Naive thymus-derived CD4-positive, alpha-beta T cell (primary cell): ENCODE measurements at regions of chr16 and their contacts with region 1.

Region 1: GRCh38 chr16:56356276-56357240 is 68.8 kb downstream of the AMFR start:
- DNase-seq: peak; percentile 26 to 62 (median 43)
- ATAC-seq: peak; percentile 87
- H3K4me3 ChIP-seq: peak overlapping the region; percentile 63
- H3K4me3 Mint-ChIP-seq: peak overlapping the region; percentile 82 to 93 (median 90)
- H3K27ac ChIP-seq: peak overlapping the region; percentile 60
- H3K27ac Mint-ChIP-seq: peak overlapping the region; percentile 71 to 95 (median 91)
- H3K4me1 ChIP-seq: peaks cover 0 to 11% of the 10 kb centered on the region in 2 donors
- H3K4me1 Mint-ChIP-seq: peaks cover 4 to 41% (median 38%) of the 10 kb centered on the region in 7 donors
- H3K27me3 ChIP-seq: no peaks in the 10 kb centered on the region
- H3K27me3 Mint-ChIP-seq: no peaks in the 10 kb centered on the region

Region 2: GRCh38 chr16:56317998-56318826 is 38.3 kb before region 1 on chr16:
- CTCF ChIA-PET with region 1: no interaction called
- POLR2A ChIA-PET with region 1: no interaction called
- intact Hi-C with region 1: loop called in 1 of 2 experiments (anchors 2 kb)
- DNase-seq: peak; percentile 42 to 82 (median 67)
- ATAC-seq: peak; percentile 95
- H3K4me3 ChIP-seq: peak overlapping the region; percentile 47
- H3K4me3 Mint-ChIP-seq: peak overlapping the region; percentile 29 to 72 (median 56)
- H3K27ac ChIP-seq: no peak overlapping the region
- H3K27ac Mint-ChIP-seq: peak overlapping the region in 1 of 9 donors; percentile 66
- H3K4me1 ChIP-seq: peaks cover 0 to 7% of the 10 kb centered on the region in 2 donors
- H3K4me1 Mint-ChIP-seq: peaks cover 0 to 14% (median 0%) of the 10 kb centered on the region in 7 donors
- H3K27me3 ChIP-seq: no peaks in the 10 kb centered on the region
- H3K27me3 Mint-ChIP-seq: peaks cover 0 to 9% (median 4%) of the 10 kb centered on the region in 5 donors

Region 3: DNA sequence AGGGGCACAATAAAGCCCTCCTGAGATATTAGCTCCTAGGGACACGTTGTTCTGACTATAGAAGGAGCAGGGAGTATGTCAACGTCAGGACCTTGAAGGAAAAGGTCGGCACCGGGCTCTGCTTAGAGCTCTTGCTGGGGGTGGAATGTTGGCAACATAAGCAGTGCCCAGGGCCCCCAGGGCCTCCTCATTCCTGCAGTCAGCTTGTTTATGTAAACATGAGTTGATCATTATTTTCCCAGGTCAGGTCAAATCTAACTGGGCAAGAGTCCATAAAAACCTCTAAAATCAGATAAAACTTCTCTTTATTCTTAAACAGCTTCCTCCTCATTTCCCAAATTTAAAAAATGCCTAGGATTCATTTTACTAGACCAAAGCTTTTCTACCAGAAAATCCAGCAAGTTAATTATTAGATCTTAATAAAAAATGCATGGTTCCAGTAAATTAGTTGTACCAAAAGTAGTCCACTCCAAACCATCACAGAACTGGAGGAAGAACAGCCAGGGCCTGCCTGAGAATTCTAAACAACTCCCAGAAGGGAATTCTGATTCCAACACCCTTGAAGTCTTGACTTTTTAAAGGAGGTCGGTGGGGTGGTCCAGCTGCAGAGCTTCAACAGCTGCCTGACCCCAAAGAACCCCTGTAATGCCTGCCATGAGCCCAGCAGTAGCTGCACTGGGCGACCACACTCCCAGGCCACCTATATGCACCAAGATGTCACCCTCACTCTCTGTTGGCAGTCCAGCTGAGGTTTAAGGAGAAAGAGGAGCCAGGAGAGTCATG is 14.5 kb after region 1 on chr16:
- CTCF ChIA-PET with region 1: interaction called, 6 read pairs
- POLR2A ChIA-PET with region 1: no interaction called
- intact Hi-C with region 1: loop called in 1 of 2 experiments (anchors 1 kb)
- DNase-seq: no peak
- ATAC-seq: no peak
- H3K4me3 ChIP-seq: no peak overlapping the region
- H3K4me3 Mint-ChIP-seq: peak overlapping the region in 1 of 10 donors; percentile 67
- H3K27ac ChIP-seq: no peak overlapping the region
- H3K27ac Mint-ChIP-seq: peak overlapping the region in 5 of 9 donors; percentile 17 to 91 (median 73)
- H3K4me1 ChIP-seq: no peaks in the 10 kb centered on the region
- H3K4me1 Mint-ChIP-seq: peaks cover 9 to 41% (median 26%) of the 10 kb centered on the region in 7 donors
- H3K27me3 ChIP-seq: no peaks in the 10 kb centered on the region
- H3K27me3 Mint-ChIP-seq: no peaks in the 10 kb centered on the region

Region 4: GRCh38 chr16:56450986-56451752 is 94.6 kb after region 1 on chr16 and contains the starts of genes NUDT21 and OGFOD1:
- CTCF ChIA-PET with region 1: no interaction called
- POLR2A ChIA-PET with region 1: no interaction called
- intact Hi-C with region 1: loop called in 1 of 2 experiments (anchors 1 kb)
- DNase-seq: peak; percentile 67 to 96 (median 93)
- ATAC-seq: peak; percentile 99
- H3K4me3 ChIP-seq: peak within 1 kb of the TSS; percentile 96
- H3K4me3 Mint-ChIP-seq: peak within 1 kb of the TSS; percentile 94 to 100 (median 97)
- H3K27ac ChIP-seq: peak within 1 kb of the TSS; percentile 92
- H3K27ac Mint-ChIP-seq: peak within 1 kb of the TSS; percentile 92 to 98 (median 93)
- H3K4me1 ChIP-seq: peaks cover 24 to 42% of the 10 kb centered on the region in 2 donors
- H3K4me1 Mint-ChIP-seq: peaks cover 50 to 77% (median 64%) of the 10 kb centered on the region in 7 donors
- H3K27me3 ChIP-seq: no peaks in the 10 kb centered on the region
- H3K27me3 Mint-ChIP-seq: no peaks in the 10 kb centered on the region
- total RNA-seq, gene NUDT21: 74.0 to 191 (median 97.5) TPM
- total RNA-seq, gene OGFOD1: 23.8 to 51.8 (median 42.1) TPM

Region 5: GRCh38 chr16:56673921-56674320 is 317.4 kb after region 1 on chr16:
- CTCF ChIA-PET with region 1: no interaction called
- POLR2A ChIA-PET with region 1: no interaction called
- intact Hi-C with region 1: no loop called
- DNase-seq: peak in 5 of 9 donors; percentile 36 to 68 (median 50)
- ATAC-seq: peak; percentile 63
- H3K4me3 ChIP-seq: no peak overlapping the region
- H3K4me3 Mint-ChIP-seq: peak overlapping the region in 6 of 10 donors; percentile 1 to 65 (median 29)
- H3K27ac ChIP-seq: no peak overlapping the region
- H3K27ac Mint-ChIP-seq: peak overlapping the region in 4 of 9 donors; percentile 43 to 76 (median 50)
- H3K4me1 ChIP-seq: peaks cover 0 to 6% of the 10 kb centered on the region in 2 donors
- H3K4me1 Mint-ChIP-seq: peaks cover 7 to 39% (median 21%) of the 10 kb centered on the region in 7 donors
- H3K27me3 ChIP-seq: peaks cover 0 to 12% of the 10 kb centered on the region in 2 donors
- H3K27me3 Mint-ChIP-seq: peaks cover 27 to 60% (median 37%) of the 10 kb centered on the region in 5 donors

Region 6: GRCh38 chr16:56708525-56709442 is 352.2 kb after region 1 on chr16:
- CTCF ChIA-PET with region 1: no interaction called
- POLR2A ChIA-PET with region 1: no interaction called
- intact Hi-C with region 1: loop called in 1 of 2 experiments (anchors 5 kb)
- DNase-seq: peak in 6 of 9 donors; percentile 35 to 53 (median 47)
- ATAC-seq: peak; percentile 77
- H3K4me3 ChIP-seq: peak overlapping the region; percentile 65
- H3K4me3 Mint-ChIP-seq: peak overlapping the region; percentile 72 to 89 (median 83)
- H3K27ac ChIP-seq: peak overlapping the region; percentile 69
- H3K27ac Mint-ChIP-seq: peak overlapping the region; percentile 80 to 100 (median 89)
- H3K4me1 ChIP-seq: peaks cover 17 to 26% of the 10 kb centered on the region in 2 donors
- H3K4me1 Mint-ChIP-seq: peaks cover 14 to 41% (median 36%) of the 10 kb centered on the region in 7 donors
- H3K27me3 ChIP-seq: no peaks in the 10 kb centered on the region
- H3K27me3 Mint-ChIP-seq: no peaks in the 10 kb centered on the region